BJ (cell line): ENCODE measurements at regions of chr1 and their contacts with region 1.

Region 1: DNA sequence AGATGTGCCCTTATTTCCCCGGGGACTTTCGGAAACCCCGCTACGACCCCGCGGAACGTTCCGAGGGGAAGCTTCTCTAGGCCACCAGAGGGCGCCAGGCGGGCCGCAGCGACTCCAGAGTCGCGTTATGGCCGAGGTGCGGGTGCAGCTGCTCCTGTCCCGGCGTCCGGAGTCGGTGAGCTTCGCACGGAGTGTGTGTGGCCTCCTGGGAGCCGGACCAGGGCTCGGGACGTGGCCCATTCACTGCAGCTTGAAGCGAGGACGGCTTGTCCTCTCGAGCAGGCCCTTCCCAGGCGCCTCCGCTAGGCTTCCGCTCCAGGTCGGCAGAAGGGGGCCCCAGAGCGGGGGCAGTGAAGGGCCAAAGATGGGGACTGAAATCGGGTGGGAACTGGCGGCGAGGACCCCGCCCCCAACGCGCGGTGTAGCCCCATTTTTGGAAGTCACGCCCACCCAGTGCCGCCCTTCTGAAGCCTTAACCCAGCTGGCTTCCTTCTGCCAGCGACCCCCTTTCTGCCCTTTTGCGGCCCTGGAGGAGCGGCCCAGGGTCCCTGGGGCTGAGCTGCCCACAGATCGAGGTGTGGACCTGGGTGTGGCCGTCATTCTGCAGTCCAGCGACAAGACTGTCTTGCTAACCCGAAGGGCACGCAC is at the start of gene NUDT17:
- DNase-seq: no peak
- H3K4me3 ChIP-seq: peak within 1 kb of the TSS; percentile 60
- H3K27me3 ChIP-seq: no peaks in the 10 kb centered on the region
- CTCF ChIP-seq: peak; percentile 98
- polyA plus RNA-seq, gene NUDT17: 4.3 and 4.5 TPM in 2 replicates

Region 2: GRCh38 chr1:145765574-145765973 is 80.1 kb before region 1 on chr1:
- CTCF ChIA-PET with region 1: no interaction called
- POLR2A ChIA-PET with region 1: no interaction called
- DNase-seq: no peak
- H3K4me3 ChIP-seq: no peak overlapping the region
- H3K27me3 ChIP-seq: no peaks in the 10 kb centered on the region
- CTCF ChIP-seq: no peak

Region 3: GRCh38 chr1:145823565-145824498 is 21.8 kb before region 1 on chr1 and contains the starts of genes POLR3C and RNF115:
- CTCF ChIA-PET with region 1: interaction called, 36 read pairs
- POLR2A ChIA-PET with region 1: interaction called, 3 read pairs
- DNase-seq: peak; percentile 52
- H3K4me3 ChIP-seq: peak within 1 kb of the TSS; percentile 50
- H3K27me3 ChIP-seq: no peaks in the 10 kb centered on the region
- CTCF ChIP-seq: no peak
- polyA plus RNA-seq, gene POLR3C: 56.7 and 58.5 TPM in 2 replicates
- polyA plus RNA-seq, gene RNF115: 13.4 and 18.3 TPM in 2 replicates

Region 4: DNA sequence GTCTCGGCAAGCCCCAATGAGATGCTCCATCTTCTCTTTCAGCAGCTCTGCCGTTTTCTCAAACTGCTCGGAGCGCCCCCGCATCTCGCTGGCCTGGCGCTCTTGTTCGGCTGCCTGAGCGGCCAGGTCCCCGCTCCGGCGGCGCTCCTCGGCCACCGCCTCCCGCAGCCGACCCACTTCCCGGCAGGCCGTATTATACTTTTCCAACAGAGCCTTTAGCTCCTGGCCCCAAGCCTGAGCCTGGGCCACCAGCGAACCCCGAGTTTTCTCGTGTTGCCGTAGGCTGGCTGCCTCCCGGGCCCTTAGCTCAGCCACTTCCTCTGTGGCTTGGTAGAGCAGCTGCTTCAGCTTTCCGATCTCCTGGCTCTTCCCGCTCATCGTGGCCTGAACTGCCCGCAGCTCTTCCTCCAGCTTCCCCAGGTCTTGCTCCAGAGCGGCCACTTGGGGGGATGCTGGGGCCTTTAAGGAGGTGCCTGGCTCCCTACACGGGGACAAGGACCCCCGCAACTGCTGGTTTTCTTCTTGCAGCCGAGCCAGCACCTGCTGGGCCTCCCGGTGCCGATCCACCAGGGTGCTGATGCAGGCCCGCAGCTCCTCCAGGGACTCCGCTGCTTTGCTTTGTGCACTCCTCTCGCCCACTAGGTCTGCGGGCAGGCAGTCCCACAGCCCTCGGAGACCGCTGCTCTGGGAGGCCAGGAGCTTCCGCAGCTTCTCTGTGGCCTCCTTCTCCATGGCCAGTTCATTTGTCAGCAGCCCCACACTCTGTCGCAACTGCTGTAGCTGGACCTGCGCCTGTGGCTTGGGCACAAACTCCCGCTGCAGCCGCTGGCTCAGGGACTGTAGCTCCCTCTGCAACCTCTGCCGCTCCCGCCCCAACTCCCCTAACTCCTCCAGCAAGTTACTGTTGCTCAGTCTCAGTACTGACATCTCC is 26.6 kb after region 1 on chr1:
- CTCF ChIA-PET with region 1: interaction called, 26 read pairs
- POLR2A ChIA-PET with region 1: no interaction called
- DNase-seq: no peak
- H3K4me3 ChIP-seq: peak overlapping the region; percentile 35
- H3K27me3 ChIP-seq: no peaks in the 10 kb centered on the region
- CTCF ChIP-seq: no peak

Region 5: DNA sequence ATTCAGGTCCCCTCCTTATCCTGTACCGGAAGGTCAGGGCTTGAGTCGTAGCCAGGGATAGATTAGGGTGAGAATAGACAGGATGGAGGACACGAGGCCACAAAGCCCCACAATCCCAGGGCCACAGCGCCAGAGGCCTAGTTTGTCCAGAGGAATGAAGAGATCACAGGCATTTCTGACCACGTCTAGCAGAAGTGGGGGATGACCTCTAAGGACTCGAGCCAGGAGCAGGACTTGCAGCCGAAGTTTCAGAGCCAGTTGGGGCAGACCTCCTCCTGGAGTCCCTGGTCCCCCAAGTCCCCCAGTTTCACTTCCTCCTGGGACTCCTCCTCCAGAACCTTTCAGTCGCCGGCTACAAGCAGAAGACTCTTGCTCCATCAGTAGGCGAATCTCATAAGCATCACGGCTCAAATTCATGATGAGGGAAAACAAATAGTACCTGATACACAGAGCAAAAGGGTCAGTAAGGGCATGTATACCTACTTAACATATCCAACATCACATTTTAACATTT is 66.5 kb after region 1 on chr1:
- CTCF ChIA-PET with region 1: interaction called, 58 read pairs
- POLR2A ChIA-PET with region 1: no interaction called
- DNase-seq: no peak
- H3K4me3 ChIP-seq: no peak overlapping the region
- H3K27me3 ChIP-seq: no peaks in the 10 kb centered on the region
- CTCF ChIP-seq: no peak

Region 6: GRCh38 chr1:146007506-146008133 is 162.0 kb after region 1 on chr1:
- CTCF ChIA-PET with region 1: interaction called, 26 read pairs
- POLR2A ChIA-PET with region 1: no interaction called
- DNase-seq: no peak
- H3K4me3 ChIP-seq: no peak overlapping the region
- H3K27me3 ChIP-seq: no peaks in the 10 kb centered on the region
- CTCF ChIP-seq: no peak

Region 7: DNA sequence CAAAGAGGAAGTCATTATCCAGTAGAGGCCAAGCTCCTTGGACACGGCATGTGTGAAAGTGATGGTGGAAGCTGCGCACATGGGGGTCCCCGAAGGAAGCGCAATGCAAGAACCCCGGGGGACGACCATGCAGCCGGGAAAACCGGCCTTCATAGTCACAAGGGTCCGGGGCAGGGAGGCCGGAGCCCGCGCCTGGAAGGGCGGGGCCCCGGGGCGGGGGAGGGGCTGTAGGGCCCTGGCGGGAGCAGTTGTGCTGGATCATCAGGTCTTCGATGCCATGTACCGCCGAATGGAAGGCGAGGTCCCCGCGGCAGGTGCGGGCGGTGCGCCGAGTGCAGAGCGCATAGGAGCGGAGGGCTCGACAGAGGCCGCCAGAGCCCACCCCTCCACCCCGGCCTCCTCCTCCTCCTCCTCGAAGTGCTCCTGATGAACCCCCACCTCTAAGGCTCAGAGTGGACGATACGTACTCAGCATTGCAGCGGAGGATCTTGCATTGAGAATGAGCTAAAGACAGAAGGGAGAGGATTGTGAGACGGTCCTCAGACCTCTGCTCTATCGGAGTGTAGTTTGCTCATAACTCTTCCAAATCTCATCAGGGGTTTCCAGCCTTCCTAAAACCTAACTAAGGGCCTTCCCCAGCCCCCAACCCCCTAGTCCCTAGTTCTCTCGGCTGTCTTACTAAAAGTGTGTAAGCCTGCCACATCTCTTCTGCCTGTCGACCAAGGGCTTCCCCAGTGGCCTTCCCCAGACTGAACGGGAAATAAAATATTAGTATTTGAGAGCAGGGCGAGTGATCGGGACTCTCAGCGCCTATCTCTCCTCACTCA is 173.8 kb after region 1 on chr1:
- CTCF ChIA-PET with region 1: interaction called, 31 read pairs
- POLR2A ChIA-PET with region 1: no interaction called
- DNase-seq: no peak
- H3K4me3 ChIP-seq: no peak overlapping the region
- H3K27me3 ChIP-seq: peaks cover 3% of the 10 kb centered on the region; the same call in 1 of the 2 replicates
- CTCF ChIP-seq: no peak